Activated CD4-positive, alpha-beta T cell treated with anti-CD3 and anti-CD28 coated beads for 36 hours (primary cell): ENCODE measurements at regions of chr1 and their contacts with region 1.

Region 1: DNA sequence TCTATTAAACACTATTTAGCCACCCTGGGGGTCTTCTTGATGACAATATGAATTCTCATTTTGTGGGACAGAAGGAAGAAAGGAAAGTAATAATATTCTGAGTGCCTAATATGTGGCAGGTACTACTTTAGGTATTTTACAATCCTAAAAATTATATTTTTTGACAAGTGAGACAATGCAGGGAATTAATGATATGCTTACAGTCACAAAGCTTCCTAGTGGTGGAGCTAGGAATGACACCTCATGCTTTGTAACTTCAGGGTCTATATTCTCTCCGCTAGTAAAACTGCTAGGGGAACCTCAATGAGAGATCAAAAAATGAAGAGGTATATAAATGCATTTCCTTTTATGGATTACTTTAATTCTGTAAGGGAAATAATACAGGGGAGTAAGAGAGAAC is 44.3 kb downstream of the TPR start:
- DNase-seq: no peak
- ATAC-seq: no peak
- H3K4me3 Mint-ChIP-seq: no peak overlapping the region
- H3K27ac Mint-ChIP-seq: no peak overlapping the region
- H3K4me1 Mint-ChIP-seq: peaks cover 5% of the 10 kb centered on the region
- H3K27me3 Mint-ChIP-seq: no peaks in the 10 kb centered on the region

Region 2: DNA sequence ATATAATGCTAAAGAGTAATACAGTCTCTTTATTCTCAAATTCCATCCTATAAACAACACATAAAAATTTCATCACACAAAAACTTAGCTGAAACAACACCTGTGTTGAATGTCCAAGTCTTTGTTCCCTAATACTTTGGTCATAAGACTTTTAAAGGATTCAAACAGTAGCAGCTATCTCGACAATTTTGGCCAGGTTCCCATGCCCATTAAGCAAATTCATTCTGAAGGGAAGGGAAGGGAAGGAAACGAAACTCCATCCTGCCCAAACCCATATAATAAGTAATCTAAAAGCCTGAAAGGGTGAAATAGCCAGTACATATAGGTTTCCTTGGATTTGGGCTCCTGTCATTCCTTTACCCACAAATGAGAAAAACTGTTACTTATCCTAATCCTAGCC is 1021.2 kb before region 1 on chr1:
- CTCF ChIA-PET with region 1: no interaction called
- POLR2A ChIA-PET with region 1: no interaction called
- intact Hi-C with region 1: loop called in 1 of 2 experiments (anchors 10 kb)
- DNase-seq: no peak
- ATAC-seq: no peak
- H3K4me3 Mint-ChIP-seq: no peak overlapping the region
- H3K27ac Mint-ChIP-seq: no peak overlapping the region
- H3K4me1 Mint-ChIP-seq: peaks cover 31% of the 10 kb centered on the region
- H3K27me3 Mint-ChIP-seq: no peaks in the 10 kb centered on the region

Region 3: DNA sequence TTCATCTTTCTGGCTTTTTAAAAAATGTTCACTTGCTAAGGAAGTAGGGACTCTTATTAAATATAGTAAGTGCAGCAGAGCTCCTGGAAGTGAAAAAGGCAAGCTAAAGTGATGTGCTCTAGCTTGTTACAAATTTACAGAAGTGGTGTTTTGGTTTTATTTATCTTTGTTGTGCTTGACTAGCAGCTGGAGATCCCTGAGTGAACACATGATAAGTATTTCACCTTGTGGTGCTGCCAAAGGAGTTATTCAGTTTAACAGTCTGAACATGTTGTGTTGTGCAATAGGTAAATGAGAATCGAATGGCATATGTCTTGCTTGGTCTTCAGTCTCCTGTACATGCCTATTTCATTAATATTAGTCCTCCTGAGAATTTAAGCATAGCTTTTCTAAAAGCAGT is 271.4 kb before region 1 on chr1:
- CTCF ChIA-PET with region 1: no interaction called
- POLR2A ChIA-PET with region 1: no interaction called
- intact Hi-C with region 1: no loop called
- DNase-seq: no peak
- ATAC-seq: no peak
- H3K4me3 Mint-ChIP-seq: no peak overlapping the region
- H3K27ac Mint-ChIP-seq: no peak overlapping the region
- H3K4me1 Mint-ChIP-seq: no peaks in the 10 kb centered on the region
- H3K27me3 Mint-ChIP-seq: peaks cover 2% of the 10 kb centered on the region

Region 4: DNA sequence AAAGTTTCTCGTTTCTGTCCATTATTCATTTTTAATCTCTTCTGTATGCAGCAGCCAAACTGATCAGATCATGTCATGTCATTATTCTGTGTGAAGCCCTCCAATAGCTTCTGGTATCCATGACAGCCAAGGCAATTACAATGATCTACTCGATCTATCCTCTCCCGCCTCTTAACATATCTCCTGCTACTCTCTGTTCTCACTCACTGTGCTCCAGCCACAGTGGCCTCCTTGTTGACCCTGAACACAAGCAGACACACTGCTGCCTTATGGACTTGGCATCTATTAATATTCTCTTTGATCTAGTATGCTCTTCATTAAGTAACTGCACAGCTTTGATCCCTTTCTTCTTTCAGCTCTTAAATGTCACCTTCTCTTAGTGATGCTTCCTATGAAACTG is 15.2 kb before region 1 on chr1:
- CTCF ChIA-PET with region 1: interaction called, 94 read pairs
- POLR2A ChIA-PET with region 1: no interaction called
- intact Hi-C with region 1: no loop called
- DNase-seq: no peak
- ATAC-seq: no peak
- H3K4me3 Mint-ChIP-seq: no peak overlapping the region
- H3K27ac Mint-ChIP-seq: peak overlapping the region; percentile 40
- H3K4me1 Mint-ChIP-seq: peaks cover 4% of the 10 kb centered on the region
- H3K27me3 Mint-ChIP-seq: no peaks in the 10 kb centered on the region

Region 5: DNA sequence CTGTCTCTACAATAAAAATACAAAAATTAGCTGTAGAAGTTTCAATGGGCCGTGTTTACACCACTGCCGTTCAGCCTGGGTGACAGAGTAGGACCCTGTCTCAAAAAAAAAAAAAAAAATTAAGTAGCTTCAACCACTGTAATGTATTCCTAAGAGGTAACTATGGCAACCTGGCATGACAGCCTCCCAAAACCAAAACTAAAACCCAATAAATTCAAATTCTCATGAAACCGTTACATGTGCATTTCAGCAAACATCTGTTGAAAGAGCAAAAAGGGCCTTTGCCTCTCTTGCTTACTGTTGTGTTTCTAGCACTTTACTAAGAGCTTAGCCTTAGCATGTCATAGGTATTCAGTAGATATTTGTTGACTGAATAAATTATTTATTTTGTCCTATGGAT is 78.3 kb after region 1 on chr1:
- CTCF ChIA-PET with region 1: no interaction called
- POLR2A ChIA-PET with region 1: no interaction called
- intact Hi-C with region 1: no loop called
- DNase-seq: no peak
- ATAC-seq: no peak
- H3K4me3 Mint-ChIP-seq: no peak overlapping the region
- H3K27ac Mint-ChIP-seq: no peak overlapping the region
- H3K4me1 Mint-ChIP-seq: no peaks in the 10 kb centered on the region
- H3K27me3 Mint-ChIP-seq: no peaks in the 10 kb centered on the region